ENCODE measurements at regions of chr1 and their contacts with region 1.

Region 1: GRCh38 chr1:230978491-230979388 is at the starts of genes ARV1 and TTC13:
- DNase-seq: peak; percentile 92 to 96
- ATAC-seq: peak; percentile 94 to 99 (median 94)
- H3K4me3 ChIP-seq: peak within 1 kb of the TSS; percentile 57
- H3K4me3 Mint-ChIP-seq: peak within 1 kb of the TSS; percentile 99
- H3K27ac ChIP-seq: peak within 1 kb of the TSS; percentile 82
- H3K27ac Mint-ChIP-seq: peak within 1 kb of the TSS in 1 of 2 donors; percentile 97
- H3K4me1 ChIP-seq: peaks cover 40% of the 10 kb centered on the region
- H3K4me1 Mint-ChIP-seq: peaks cover 31 to 49% of the 10 kb centered on the region in 2 donors
- H3K27me3 ChIP-seq: no peaks in the 10 kb centered on the region
- H3K27me3 Mint-ChIP-seq: no peaks in the 10 kb centered on the region
- CTCF ChIP-seq: peak; percentile 35
- total RNA-seq, gene ARV1: 7.2 to 7.6 (median 7.3) TPM
- total RNA-seq, gene TTC13: 72.4 to 90.1 (median 80.4) TPM

Region 2: GRCh38 chr1:230642263-230642959 is 336.3 kb before region 1 on chr1 and contains the start of gene COG2:
- intact Hi-C with region 1: loop called (anchors 2 kb)
- DNase-seq: peak; percentile 96 to 99
- ATAC-seq: peak; percentile 91 to 99 (median 92)
- H3K4me3 ChIP-seq: peak within 1 kb of the TSS; percentile 77
- H3K4me3 Mint-ChIP-seq: peak within 1 kb of the TSS; percentile 98
- H3K27ac ChIP-seq: peak within 1 kb of the TSS; percentile 77
- H3K27ac Mint-ChIP-seq: peak within 1 kb of the TSS; percentile 93 to 95
- H3K4me1 ChIP-seq: peaks cover 21% of the 10 kb centered on the region
- H3K4me1 Mint-ChIP-seq: peaks cover 43 to 52% of the 10 kb centered on the region in 2 donors
- H3K27me3 ChIP-seq: peaks cover 5% of the 10 kb centered on the region
- H3K27me3 Mint-ChIP-seq: peaks cover 17 to 21% of the 10 kb centered on the region in 2 donors
- CTCF ChIP-seq: peak; percentile 100
- total RNA-seq, gene COG2: 15.8 to 24.1 (median 17.5) TPM

Region 3: DNA sequence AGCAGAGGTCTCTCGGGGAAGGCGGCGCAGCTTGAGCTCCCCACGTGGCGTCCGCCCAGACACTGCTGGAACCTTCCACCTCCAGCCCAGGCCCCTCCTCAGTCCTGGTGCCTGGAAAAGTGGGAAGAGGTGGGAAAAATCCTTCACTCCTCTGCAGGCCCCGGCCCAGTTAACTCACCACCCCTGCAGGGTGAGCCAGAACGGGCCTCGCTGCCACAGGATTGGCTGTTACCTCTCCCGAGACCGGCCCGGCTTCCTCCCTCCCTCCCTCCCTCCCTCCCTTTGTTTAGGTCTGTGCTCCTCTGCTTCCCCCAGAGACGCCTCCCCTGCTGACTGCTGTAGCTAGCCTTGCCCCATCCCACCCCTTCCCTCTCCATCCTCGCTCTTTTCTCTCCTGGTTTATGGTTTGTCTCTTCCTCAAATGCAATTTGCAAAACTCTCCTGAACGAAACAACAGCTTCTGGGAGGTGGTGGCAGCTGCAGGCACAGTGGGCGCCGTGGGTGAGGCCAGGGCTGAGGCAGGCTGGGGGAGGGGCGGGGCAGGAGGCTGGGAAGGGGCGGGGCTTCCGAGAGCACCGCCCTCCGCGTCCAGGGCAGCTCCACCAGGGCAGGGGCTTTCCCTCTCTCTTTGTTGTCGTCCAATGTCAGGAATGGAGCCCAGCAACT is 225.0 kb before region 1 on chr1:
- intact Hi-C with region 1: no loop called
- DNase-seq: peak in 1 of 2 donors; percentile 38
- ATAC-seq: peak in 2 of 3 donors; percentile 72 to 78
- H3K4me3 ChIP-seq: no peak overlapping the region
- H3K4me3 Mint-ChIP-seq: peak overlapping the region; percentile 56
- H3K27ac ChIP-seq: no peak overlapping the region
- H3K27ac Mint-ChIP-seq: no peak overlapping the region
- H3K4me1 ChIP-seq: no peaks in the 10 kb centered on the region
- H3K4me1 Mint-ChIP-seq: peaks cover 0 to 4% of the 10 kb centered on the region in 2 donors
- H3K27me3 ChIP-seq: no peaks in the 10 kb centered on the region
- H3K27me3 Mint-ChIP-seq: no peaks in the 10 kb centered on the region
- CTCF ChIP-seq: no peak

Region 4: GRCh38 chr1:230957580-230957989 is 21.2 kb before region 1 on chr1:
- intact Hi-C with region 1: no loop called
- DNase-seq: no peak
- ATAC-seq: no peak
- H3K4me3 ChIP-seq: no peak overlapping the region
- H3K4me3 Mint-ChIP-seq: no peak overlapping the region
- H3K27ac ChIP-seq: peak overlapping the region; percentile 28
- H3K27ac Mint-ChIP-seq: no peak overlapping the region
- H3K4me1 ChIP-seq: no peaks in the 10 kb centered on the region
- H3K4me1 Mint-ChIP-seq: peaks cover 34% of the 10 kb centered on the region in 2 donors
- H3K27me3 ChIP-seq: no peaks in the 10 kb centered on the region
- H3K27me3 Mint-ChIP-seq: no peaks in the 10 kb centered on the region
- CTCF ChIP-seq: no peak

Region 5: DNA sequence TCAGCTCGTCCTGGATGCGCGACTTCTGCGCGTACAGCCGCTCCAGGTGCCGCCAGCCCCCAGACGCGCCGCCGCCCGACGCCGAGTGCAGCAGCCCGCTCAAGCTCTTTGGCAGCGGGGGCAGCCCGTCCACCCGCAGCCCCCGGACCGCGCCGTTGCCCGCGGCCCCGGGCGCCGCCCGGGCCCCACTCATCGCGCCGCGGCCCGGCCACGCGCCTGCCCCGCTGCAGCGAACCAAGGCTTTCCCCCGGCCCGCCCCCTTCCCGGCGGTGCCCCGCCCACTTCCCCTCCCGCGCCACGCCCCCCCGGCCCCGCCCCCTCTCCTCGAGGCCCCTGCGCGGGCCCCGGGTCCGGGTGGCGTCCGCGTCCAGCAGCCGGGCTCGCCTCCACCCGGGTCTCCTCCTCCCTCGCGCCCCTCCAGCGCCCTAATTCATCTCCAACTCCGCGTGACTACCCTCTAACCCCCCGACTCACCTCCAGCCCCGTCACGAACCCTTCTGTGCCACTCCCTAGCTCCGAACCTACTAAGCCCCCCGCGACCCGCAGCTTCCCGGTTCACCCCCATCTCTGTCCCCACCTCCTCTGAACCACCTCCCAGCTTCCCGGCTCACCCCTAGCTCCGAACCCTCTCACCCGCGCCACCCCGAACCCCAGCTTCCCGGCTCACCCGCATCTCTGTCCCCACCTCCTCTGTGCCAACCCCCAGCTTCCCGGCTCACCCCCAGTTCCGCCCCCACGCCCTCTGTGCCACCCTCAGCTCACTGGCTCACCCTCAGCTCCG is 61.5 kb after region 1 on chr1 and contains the start of gene FAM89A:
- intact Hi-C with region 1: loop called (anchors 2 kb)
- DNase-seq: peak; percentile 65 to 83
- ATAC-seq: peak; percentile 85 to 89 (median 85)
- H3K4me3 ChIP-seq: peak within 1 kb of the TSS; percentile 81
- H3K4me3 Mint-ChIP-seq: peak within 1 kb of the TSS; percentile 86
- H3K27ac ChIP-seq: no peak within 1 kb of the TSS
- H3K27ac Mint-ChIP-seq: peak within 1 kb of the TSS; percentile 22 to 58
- H3K4me1 ChIP-seq: peaks cover 19% of the 10 kb centered on the region
- H3K4me1 Mint-ChIP-seq: peaks cover 18 to 27% of the 10 kb centered on the region in 2 donors
- H3K27me3 ChIP-seq: no peaks in the 10 kb centered on the region
- H3K27me3 Mint-ChIP-seq: peaks cover 4 to 8% of the 10 kb centered on the region in 2 donors
- CTCF ChIP-seq: no peak
- total RNA-seq, gene FAM89A: 1.4 to 2.5 (median 2.0) TPM

Region 6: DNA sequence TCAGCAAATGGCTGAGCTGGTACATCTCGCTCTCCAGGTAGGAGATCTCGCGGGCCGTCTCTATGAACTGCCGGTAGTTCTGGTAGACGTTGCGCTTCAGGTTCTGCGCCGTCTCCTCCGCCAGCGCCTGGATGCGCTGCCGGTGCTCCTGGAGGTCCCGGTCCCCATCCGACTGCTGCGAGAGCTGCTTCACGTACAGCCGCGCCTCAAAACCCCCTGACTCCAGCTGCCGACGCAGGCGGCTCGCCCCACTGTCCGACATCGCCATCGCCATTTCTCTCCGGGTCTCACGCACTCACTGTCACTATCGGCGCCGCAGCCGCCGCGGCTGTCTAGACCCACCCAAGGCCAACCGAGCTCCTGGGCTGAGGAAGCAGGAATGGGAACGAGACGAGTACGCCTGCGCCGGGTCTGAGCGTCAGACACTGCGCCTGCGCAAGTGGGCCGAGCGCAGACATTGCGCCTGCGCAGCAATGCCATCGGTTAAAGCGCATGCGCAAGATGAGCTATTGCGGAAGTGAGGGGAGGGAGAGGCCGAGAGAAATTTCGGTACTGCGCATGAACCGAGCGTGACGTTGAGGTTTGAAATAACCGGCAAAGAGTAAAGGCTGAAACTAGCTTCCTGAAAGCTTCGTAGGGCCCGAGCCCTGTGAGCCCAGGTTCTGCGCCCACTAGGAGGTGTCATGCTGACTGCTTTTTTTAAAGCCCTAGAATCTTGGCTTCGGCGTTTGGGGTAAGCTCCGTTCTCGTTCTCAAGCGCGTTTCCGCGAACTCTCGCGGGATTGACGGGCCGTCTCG is 358.9 kb after region 1 on chr1 and contains the start of gene EXOC8:
- intact Hi-C with region 1: loop called (anchors 5 kb)
- DNase-seq: peak; percentile 99 to 100
- ATAC-seq: peak; percentile 76 to 89 (median 86)
- H3K4me3 ChIP-seq: peak within 1 kb of the TSS; percentile 95
- H3K4me3 Mint-ChIP-seq: peak within 1 kb of the TSS; percentile 100
- H3K27ac ChIP-seq: peak within 1 kb of the TSS; percentile 97
- H3K27ac Mint-ChIP-seq: peak within 1 kb of the TSS; percentile 99 to 100
- H3K4me1 ChIP-seq: peaks cover 39% of the 10 kb centered on the region
- H3K4me1 Mint-ChIP-seq: peaks cover 53 to 64% of the 10 kb centered on the region in 2 donors
- H3K27me3 ChIP-seq: no peaks in the 10 kb centered on the region
- H3K27me3 Mint-ChIP-seq: no peaks in the 10 kb centered on the region
- CTCF ChIP-seq: no peak
- total RNA-seq, gene EXOC8: 29.0 to 37.1 (median 34.7) TPM

Measured in natural killer cell (primary cell).